ENCODE measurements at regions of chr5 and their contacts with region 1.

Region 1: DNA sequence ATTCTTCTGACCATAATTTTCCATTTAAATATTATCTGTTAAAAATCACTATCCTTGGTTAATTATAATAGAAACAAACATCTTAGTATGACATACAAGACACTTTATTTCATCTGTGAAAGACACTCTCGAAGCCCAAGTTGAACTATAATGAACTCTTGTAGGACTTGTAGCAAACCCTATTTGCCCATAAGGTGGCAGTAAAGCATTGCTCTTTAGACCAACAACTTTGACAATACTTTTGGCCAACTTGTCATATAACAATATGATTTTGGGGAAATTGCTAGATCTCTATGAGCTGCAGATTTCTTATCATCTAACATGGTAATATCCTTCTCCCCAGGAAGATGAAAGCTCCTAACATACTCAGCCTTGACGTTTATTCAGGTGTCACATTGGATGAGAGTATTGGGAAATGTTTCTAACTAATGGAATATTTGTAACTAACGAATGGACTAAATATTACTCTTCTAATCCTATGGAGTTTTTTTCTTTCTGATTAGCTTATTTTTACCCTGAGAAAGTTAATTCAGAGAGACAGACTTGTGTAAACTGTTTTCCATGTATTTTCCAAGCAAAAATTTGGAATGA is 11.0 kb downstream of the SPINK14 start:
- DNase-seq: no peak
- H3K4me3 ChIP-seq: no peak overlapping the region
- H3K27ac ChIP-seq: no peak overlapping the region
- H3K4me1 ChIP-seq: no peaks in the 10 kb centered on the region
- H3K27me3 ChIP-seq: no peaks in the 10 kb centered on the region
- CTCF ChIP-seq: peak; percentile 21 to 60 (median 36)

Region 2: DNA sequence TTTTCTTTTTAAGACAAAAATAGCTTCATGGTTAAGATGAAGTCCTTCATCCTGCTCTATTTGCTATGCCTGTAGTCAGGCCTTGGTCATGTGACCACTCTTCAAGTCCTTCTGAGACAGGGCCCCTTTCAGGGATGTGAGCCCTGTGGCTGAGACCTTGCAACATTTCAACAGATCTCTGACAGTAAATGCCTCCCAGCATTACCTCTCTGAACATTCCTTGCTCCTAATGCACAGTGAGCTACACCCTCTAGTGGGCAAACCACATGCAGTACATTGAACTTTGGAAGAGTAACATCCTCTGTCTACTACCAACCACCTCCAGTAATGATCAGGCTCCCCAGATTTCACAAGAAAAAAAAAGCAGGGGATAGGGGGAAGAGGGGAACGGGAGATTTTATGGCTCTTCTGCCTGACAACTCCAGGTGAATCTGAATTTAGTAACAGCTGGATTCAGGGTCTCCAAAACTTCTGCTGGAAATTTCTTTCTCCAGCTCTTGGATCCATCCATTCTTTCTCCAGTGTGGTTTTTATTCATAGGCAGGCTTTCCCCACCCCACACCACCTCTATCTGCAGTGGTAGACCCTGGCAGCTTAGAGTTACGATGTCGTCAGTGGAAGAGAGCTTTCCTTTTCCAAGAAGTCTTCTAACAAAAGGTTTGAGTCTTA is 195.5 kb after region 1 on chr5:
- intact Hi-C with region 1: loop called (anchors 10 kb)
- DNase-seq: no peak
- H3K4me3 ChIP-seq: no peak overlapping the region
- H3K27ac ChIP-seq: no peak overlapping the region
- H3K4me1 ChIP-seq: no peaks in the 10 kb centered on the region
- H3K27me3 ChIP-seq: no peaks in the 10 kb centered on the region
- CTCF ChIP-seq: peak in 2 of 3 experiments; percentile 39 to 52

Measured in ascending aorta (tissue), 2 donors.